ENCODE measurements at regions of chr6 and their contacts with region 1.

Region 1: DNA sequence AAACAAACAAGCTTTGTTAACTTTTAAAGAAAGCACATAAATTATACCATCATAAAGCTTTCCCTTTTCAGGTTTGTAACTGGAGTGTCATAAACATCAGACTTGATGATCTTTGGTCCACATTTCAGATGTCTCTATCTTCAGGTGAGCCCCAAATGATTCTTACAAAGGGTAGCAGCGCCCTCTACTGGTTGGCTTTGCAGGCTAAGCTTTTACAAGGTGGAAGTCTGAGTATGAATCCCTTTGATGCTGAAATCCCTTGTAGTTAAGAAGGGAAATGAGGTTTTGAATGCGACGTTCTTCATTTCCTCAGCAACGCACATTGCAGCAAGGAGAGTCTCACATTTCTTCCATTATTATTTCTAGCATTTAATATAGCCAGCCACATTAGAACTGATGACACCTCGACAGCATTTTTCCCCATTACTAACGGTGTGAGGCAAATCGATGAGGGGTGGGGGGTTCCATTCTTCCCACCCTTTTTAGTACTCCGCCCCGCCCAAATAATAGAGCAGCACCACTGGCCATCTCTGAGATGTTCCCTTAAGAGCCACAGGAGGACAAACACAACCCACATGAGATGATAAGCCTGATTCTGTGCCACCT is 126.3 kb upstream of the NT5E start:
- DNase-seq: peak; percentile 45 to 81 (median 74)
- ATAC-seq: peak; percentile 56
- H3K4me3 ChIP-seq: no peak overlapping the region
- H3K4me3 Mint-ChIP-seq: no peak overlapping the region
- H3K27ac ChIP-seq: no peak overlapping the region
- H3K27ac Mint-ChIP-seq: no peak overlapping the region
- H3K4me1 ChIP-seq: peaks cover 4% of the 10 kb centered on the region
- H3K4me1 Mint-ChIP-seq: peaks cover 2% of the 10 kb centered on the region
- H3K27me3 ChIP-seq: no peaks in the 10 kb centered on the region
- H3K27me3 Mint-ChIP-seq: peaks cover 5% of the 10 kb centered on the region
- CTCF ChIP-seq: peak; percentile 84

Region 2: GRCh38 chr6:83615025-83615999 is 1708.2 kb before region 1 on chr6:
- CTCF ChIA-PET with region 1: interaction called, 8 read pairs
- POLR2A ChIA-PET with region 1: no interaction called
- intact Hi-C with region 1: loop called in 1 of 2 experiments (anchors 2 kb)
- DNase-seq: peak in 2 of 9 experiments; percentile 8 to 24
- ATAC-seq: no peak
- H3K4me3 ChIP-seq: no peak overlapping the region
- H3K4me3 Mint-ChIP-seq: no peak overlapping the region
- H3K27ac ChIP-seq: no peak overlapping the region
- H3K27ac Mint-ChIP-seq: no peak overlapping the region
- H3K4me1 ChIP-seq: no peaks in the 10 kb centered on the region
- H3K4me1 Mint-ChIP-seq: no peaks in the 10 kb centered on the region
- H3K27me3 ChIP-seq: no peaks in the 10 kb centered on the region
- H3K27me3 Mint-ChIP-seq: no peaks in the 10 kb centered on the region
- CTCF ChIP-seq: peak; percentile 43

Region 3: GRCh38 chr6:83884523-83884922 is 1439.0 kb before region 1 on chr6:
- CTCF ChIA-PET with region 1: interaction called, 8 read pairs
- POLR2A ChIA-PET with region 1: no interaction called
- intact Hi-C with region 1: loop called (anchors 1 to 2 kb)
- DNase-seq: peak in 2 of 9 experiments; percentile 50 to 66
- ATAC-seq: peak; percentile 79
- H3K4me3 ChIP-seq: no peak overlapping the region
- H3K4me3 Mint-ChIP-seq: no peak overlapping the region
- H3K27ac ChIP-seq: no peak overlapping the region
- H3K27ac Mint-ChIP-seq: no peak overlapping the region
- H3K4me1 ChIP-seq: no peaks in the 10 kb centered on the region
- H3K4me1 Mint-ChIP-seq: peaks cover 25% of the 10 kb centered on the region
- H3K27me3 ChIP-seq: no peaks in the 10 kb centered on the region
- H3K27me3 Mint-ChIP-seq: no peaks in the 10 kb centered on the region
- CTCF ChIP-seq: peak; percentile 79

Region 4: GRCh38 chr6:85261271-85261670 is 62.3 kb before region 1 on chr6:
- CTCF ChIA-PET with region 1: no interaction called
- POLR2A ChIA-PET with region 1: no interaction called
- intact Hi-C with region 1: no loop called
- DNase-seq: no peak
- ATAC-seq: no peak
- H3K4me3 ChIP-seq: no peak overlapping the region
- H3K4me3 Mint-ChIP-seq: no peak overlapping the region
- H3K27ac ChIP-seq: no peak overlapping the region
- H3K27ac Mint-ChIP-seq: no peak overlapping the region
- H3K4me1 ChIP-seq: no peaks in the 10 kb centered on the region
- H3K4me1 Mint-ChIP-seq: no peaks in the 10 kb centered on the region
- H3K27me3 ChIP-seq: no peaks in the 10 kb centered on the region
- H3K27me3 Mint-ChIP-seq: no peaks in the 10 kb centered on the region
- CTCF ChIP-seq: no peak

Measured in CD8-positive, alpha-beta T cell (primary cell).